SK-N-SH (cell line): ENCODE measurements at regions of chr1 and their contacts with region 1.

Region 1: GRCh38 chr1:234722904-234723720 is 113.1 kb upstream of the IRF2BP2 start:
- DNase-seq: peak; percentile 56
- H3K4me3 ChIP-seq: peak overlapping the region; percentile 3 to 49
- H3K27ac ChIP-seq: peak overlapping the region; percentile 99 to 100
- H3K4me1 ChIP-seq: peaks cover 61 to 74% of the 10 kb centered on the region in 2 experiments
- H3K27me3 ChIP-seq: no peaks in the 10 kb centered on the region
- CTCF ChIP-seq: no peak
- EP300 ChIP-seq: no peak
- RAD21 ChIP-seq: no peak

Region 2: DNA sequence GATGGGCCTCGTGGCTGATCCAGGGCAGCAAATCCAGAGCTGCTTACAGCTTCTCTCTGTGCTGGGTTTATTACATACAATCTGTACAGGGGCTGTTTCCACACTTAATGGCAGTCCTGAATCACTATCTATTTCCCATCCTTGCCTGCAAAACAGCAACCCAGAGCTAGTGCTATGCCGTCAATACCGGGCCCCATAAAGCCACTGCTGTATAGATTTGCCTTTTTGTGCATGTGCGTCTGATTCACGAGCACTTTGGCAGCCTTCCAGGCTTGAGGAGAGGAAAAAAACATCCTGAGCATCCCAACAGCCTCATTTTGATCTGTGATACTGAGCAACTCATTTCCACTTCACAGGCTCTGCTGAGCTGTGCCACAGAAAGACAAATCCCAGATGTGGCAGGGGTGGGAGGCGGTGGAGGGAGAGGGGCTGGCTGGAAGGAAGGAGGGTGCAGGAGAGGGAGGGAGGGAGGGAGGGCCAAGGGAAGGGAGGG is 179.0 kb before region 1 on chr1:
- CTCF ChIA-PET with region 1: no interaction called
- POLR2A ChIA-PET with region 1: interaction called, 15 read pairs
- DNase-seq: peak; percentile 86
- H3K4me3 ChIP-seq: no peak overlapping the region; a peak in 1 of 4 replicates
- H3K27ac ChIP-seq: peak overlapping the region; percentile 92 to 100
- H3K4me1 ChIP-seq: peaks cover 23 to 67% of the 10 kb centered on the region in 2 experiments
- H3K27me3 ChIP-seq: no peaks in the 10 kb centered on the region
- CTCF ChIP-seq: no peak
- EP300 ChIP-seq: peak; percentile 88 to 94
- RAD21 ChIP-seq: peak; percentile 30; the same call in 1 of the 2 replicates

Region 3: GRCh38 chr1:234599617-234600417 is 123.3 kb before region 1 on chr1:
- CTCF ChIA-PET with region 1: interaction called, 5 read pairs
- POLR2A ChIA-PET with region 1: interaction called, 18 read pairs
- DNase-seq: peak; percentile 93
- H3K4me3 ChIP-seq: peak overlapping the region; percentile 52 to 57
- H3K27ac ChIP-seq: peak overlapping the region; percentile 98 to 100
- H3K4me1 ChIP-seq: peaks cover 39 to 58% of the 10 kb centered on the region in 2 experiments
- H3K27me3 ChIP-seq: no peaks in the 10 kb centered on the region
- CTCF ChIP-seq: 0 out of 2 replicates have a peak, but pooled peaks have one; percentile 5
- EP300 ChIP-seq: no peak
- RAD21 ChIP-seq: no peak

Region 4: DNA sequence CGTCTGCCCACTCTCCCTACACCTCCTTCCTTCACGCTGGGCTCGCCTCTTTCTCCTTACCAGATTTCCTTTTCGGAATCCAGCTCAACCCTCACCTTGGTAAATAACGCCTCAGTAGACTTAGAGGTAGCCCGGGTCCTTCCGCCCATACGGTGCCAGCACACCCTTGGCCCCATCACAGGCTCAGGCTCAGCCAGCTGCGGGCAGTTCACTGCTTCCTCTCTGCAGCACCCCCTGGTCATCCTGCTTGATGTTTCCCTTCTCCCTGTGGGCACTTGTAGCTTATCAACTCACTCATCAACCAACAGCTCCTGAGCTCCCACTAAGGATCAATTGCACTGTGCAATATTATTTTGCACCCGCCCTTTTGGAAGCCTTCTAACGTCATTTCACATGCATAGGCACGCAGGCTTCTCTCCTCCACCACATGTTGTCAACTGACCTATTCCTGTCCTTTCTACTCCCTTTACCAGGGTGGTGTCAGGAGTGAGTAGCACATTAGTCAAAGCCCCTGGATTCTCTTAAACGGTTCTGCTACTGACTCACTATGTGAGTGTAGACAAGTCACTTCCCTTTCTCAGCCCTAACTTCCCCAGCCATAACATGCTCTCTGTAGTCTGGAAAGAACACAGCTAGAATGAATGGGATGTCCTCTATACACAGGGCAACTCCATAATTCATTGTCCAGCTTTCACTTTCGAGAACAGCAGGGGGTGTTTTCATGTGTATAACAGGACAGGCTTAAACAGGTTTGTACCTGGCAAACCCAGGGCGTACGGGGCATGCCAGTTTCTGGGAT is 66.1 kb before region 1 on chr1:
- CTCF ChIA-PET with region 1: interaction called, 5 read pairs
- POLR2A ChIA-PET with region 1: interaction called, 15 read pairs
- DNase-seq: peak; percentile 39
- H3K4me3 ChIP-seq: no peak overlapping the region
- H3K27ac ChIP-seq: peak overlapping the region in 1 of 2 experiments; percentile 79; a peak in 3 of 4 replicates
- H3K4me1 ChIP-seq: peaks cover 27 to 35% of the 10 kb centered on the region in 2 experiments
- H3K27me3 ChIP-seq: no peaks in the 10 kb centered on the region
- CTCF ChIP-seq: no peak
- EP300 ChIP-seq: peak; percentile 4 to 85; a peak in 2 of 4 replicates
- RAD21 ChIP-seq: no peak

Region 5: GRCh38 chr1:234769986-234770795 is 47.1 kb after region 1 on chr1:
- CTCF ChIA-PET with region 1: interaction called, 9 read pairs
- POLR2A ChIA-PET with region 1: interaction called, 18 read pairs
- DNase-seq: peak; percentile 90
- H3K4me3 ChIP-seq: no peak overlapping the region
- H3K27ac ChIP-seq: peak overlapping the region in 1 of 2 experiments; percentile 92; a peak in 2 of 4 replicates
- H3K4me1 ChIP-seq: peaks cover 12 to 44% of the 10 kb centered on the region in 2 experiments
- H3K27me3 ChIP-seq: no peaks in the 10 kb centered on the region
- CTCF ChIP-seq: no peak
- EP300 ChIP-seq: peak in 1 of 2 experiments; percentile 63; a peak in 1 of 4 replicates
- RAD21 ChIP-seq: peak; percentile 56